Endothelial cell of umbilical vein (primary cell): ENCODE measurements at regions of chrX and their contacts with region 1.

Region 1: DNA sequence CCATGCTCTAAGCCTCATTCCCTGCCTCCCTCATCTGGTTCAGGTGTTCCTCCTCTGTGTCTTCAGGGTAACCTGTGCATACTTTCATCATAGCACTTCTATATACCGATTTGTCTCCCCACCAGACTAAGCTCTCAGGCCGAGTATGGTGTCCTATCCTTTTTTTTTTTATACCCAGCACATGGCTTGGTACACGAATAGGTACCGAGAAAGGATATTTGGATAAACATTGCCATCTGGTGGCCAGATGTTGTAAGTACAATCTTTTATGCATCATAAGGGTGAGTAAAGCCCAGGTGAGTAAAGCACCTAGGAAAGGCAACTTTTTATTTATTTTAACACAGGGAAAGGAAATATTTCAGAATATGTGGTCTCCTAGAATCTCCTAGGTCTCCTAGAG is 68.4 kb downstream of the MID2 start:
- DNase-seq: peak; percentile 47
- H3K4me3 ChIP-seq: no peak overlapping the region
- H3K27ac ChIP-seq: no peak overlapping the region
- H3K4me1 ChIP-seq: no peaks in the 10 kb centered on the region
- H3K27me3 ChIP-seq: no peaks in the 10 kb centered on the region
- CTCF ChIP-seq: peak in 1 of 2 donors; percentile 15
- POLR2A ChIP-seq: no peak

Region 2: DNA sequence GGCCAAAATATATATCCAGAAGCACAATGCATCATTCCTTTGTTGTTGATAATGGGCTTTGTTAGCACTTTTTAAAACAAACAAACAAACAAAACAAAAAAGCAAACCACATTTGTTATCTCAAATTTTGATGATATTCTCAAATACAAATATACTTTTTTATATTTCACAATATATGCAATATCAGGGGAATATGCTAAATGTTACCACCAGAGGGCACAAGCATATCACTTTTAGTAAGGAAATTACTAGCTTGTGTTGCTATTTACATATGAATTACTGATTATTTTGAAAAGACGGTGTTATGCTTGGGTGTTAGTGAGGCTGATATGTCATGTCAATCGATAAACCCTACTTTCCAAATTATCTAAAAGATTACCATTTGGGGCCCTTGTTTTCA is 1020.0 kb before region 1 on chrX:
- CTCF ChIA-PET with region 1: no interaction called
- POLR2A ChIA-PET with region 1: no interaction called
- dilution Hi-C with region 1: no loop called
- intact Hi-C with region 1: loop called (anchors 10 kb)
- DNase-seq: peak; percentile 35
- H3K4me3 ChIP-seq: no peak overlapping the region
- H3K27ac ChIP-seq: no peak overlapping the region
- H3K4me1 ChIP-seq: no peaks in the 10 kb centered on the region
- H3K27me3 ChIP-seq: no peaks in the 10 kb centered on the region
- CTCF ChIP-seq: peak in 1 of 2 donors; percentile 8
- POLR2A ChIP-seq: no peak

Region 3: DNA sequence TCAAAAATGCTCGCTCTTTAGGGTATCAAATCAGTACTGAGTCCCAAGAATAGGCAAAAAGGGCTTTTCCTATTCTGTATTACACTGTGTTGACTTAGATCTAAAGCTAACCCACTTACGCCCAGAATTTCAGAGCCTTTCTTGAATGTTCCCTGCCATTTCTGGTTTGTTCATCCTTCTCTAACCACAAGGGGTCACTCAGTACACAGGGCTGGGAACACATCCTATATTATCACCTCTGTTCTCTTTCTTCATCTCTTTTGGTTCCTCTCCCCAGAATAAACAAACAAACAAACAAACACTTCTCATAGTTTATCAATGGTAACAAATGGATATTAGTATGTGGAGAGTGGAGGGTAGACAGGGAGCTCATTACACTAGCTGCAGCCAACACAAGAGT is 868.5 kb before region 1 on chrX:
- CTCF ChIA-PET with region 1: no interaction called
- POLR2A ChIA-PET with region 1: no interaction called
- dilution Hi-C with region 1: no loop called
- intact Hi-C with region 1: loop called (anchors 1 kb)
- DNase-seq: peak; percentile 29
- H3K4me3 ChIP-seq: no peak overlapping the region
- H3K27ac ChIP-seq: no peak overlapping the region
- H3K4me1 ChIP-seq: no peaks in the 10 kb centered on the region
- H3K27me3 ChIP-seq: no peaks in the 10 kb centered on the region
- CTCF ChIP-seq: peak; percentile 24 to 39
- POLR2A ChIP-seq: no peak

Region 4: GRCh38 chrX:107537815-107538214 is 356.2 kb before region 1 on chrX:
- CTCF ChIA-PET with region 1: no interaction called
- POLR2A ChIA-PET with region 1: no interaction called
- dilution Hi-C with region 1: no loop called
- intact Hi-C with region 1: loop called (anchors 2 kb)
- DNase-seq: peak; percentile 29
- H3K4me3 ChIP-seq: no peak overlapping the region
- H3K27ac ChIP-seq: no peak overlapping the region
- H3K4me1 ChIP-seq: no peaks in the 10 kb centered on the region
- H3K27me3 ChIP-seq: no peaks in the 10 kb centered on the region
- CTCF ChIP-seq: peak; percentile 22 to 42
- POLR2A ChIP-seq: no peak

Region 5: DNA sequence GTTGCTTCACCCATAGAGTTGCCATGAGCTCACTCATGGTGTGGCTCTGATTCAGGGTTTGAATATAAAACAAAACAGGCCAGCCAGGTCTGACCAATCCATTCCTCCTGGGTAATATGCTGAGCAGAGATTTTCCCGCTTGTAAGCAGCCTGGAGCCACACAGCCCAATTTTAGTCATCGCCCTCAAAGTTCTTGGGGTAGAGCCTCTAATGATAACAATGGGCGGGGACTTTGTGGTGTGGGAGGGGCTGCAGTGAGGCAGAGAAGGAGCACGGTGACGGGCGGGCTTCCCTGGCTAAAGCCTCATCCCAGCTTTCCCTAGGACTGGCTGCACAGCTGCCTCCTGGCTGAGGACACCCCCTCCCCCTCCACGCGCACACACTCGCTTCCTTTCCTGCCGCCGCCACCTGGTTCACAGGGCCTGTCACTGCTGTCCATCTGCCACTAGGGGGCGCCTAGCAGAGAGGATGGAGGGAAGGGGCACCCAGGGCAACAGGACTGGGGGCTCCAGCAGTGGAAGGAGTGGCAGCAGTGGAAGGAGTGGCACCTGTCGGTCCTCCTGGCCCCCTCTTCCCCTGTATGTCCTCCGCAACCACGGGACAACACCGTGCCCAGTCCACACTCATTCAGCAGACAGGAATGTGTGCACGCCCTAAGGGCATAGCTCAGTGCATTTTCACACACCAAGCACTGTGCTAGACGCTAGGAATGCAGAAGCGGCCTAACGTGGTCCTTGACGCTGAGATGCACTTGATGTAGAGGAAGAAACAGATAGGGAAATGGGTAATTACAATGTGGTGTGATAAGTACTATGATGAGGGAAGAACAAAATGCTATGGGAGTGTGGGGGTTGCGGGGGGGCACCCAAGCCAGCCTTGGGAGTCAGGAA is 238.9 kb before region 1 on chrX:
- CTCF ChIA-PET with region 1: interaction called, 13 read pairs
- POLR2A ChIA-PET with region 1: no interaction called
- dilution Hi-C with region 1: no loop called
- intact Hi-C with region 1: loop called (anchors 1 kb)
- DNase-seq: peak; percentile 49
- H3K4me3 ChIP-seq: no peak overlapping the region
- H3K27ac ChIP-seq: peak overlapping the region; percentile 45
- H3K4me1 ChIP-seq: peaks cover 6% of the 10 kb centered on the region
- H3K27me3 ChIP-seq: no peaks in the 10 kb centered on the region
- CTCF ChIP-seq: peak; percentile 65 to 74
- POLR2A ChIP-seq: no peak

Region 6: DNA sequence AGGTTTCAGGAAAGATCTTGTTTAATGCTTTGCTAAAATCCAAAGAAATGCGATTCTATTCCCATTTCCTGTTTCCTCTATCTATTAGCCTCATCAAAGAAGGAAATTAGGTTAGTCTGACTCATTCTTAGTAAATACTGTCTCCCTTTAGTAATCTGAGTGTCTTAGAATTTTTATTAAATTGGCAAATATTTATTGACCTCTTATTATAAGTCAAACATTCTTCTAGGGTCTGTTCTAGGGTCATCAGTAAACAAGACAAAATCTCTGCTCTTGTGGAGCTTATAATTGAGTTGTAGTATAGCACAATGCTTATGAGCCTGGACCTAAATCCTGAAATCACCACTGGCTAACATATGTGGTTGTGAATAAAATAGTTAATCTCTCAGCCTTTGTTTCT is 79.3 kb before region 1 on chrX:
- CTCF ChIA-PET with region 1: no interaction called
- POLR2A ChIA-PET with region 1: no interaction called
- dilution Hi-C with region 1: no loop called
- intact Hi-C with region 1: no loop called
- DNase-seq: no peak
- H3K4me3 ChIP-seq: no peak overlapping the region
- H3K27ac ChIP-seq: no peak overlapping the region
- H3K4me1 ChIP-seq: no peaks in the 10 kb centered on the region
- H3K27me3 ChIP-seq: no peaks in the 10 kb centered on the region
- CTCF ChIP-seq: no peak
- POLR2A ChIP-seq: no peak

Region 7: GRCh38 chrX:107826238-107827029 is 67.6 kb before region 1 on chrX:
- CTCF ChIA-PET with region 1: interaction called, 5 read pairs
- POLR2A ChIA-PET with region 1: no interaction called
- dilution Hi-C with region 1: no loop called
- intact Hi-C with region 1: loop called (anchors 5 kb)
- DNase-seq: peak; percentile 36
- H3K4me3 ChIP-seq: peak overlapping the region; percentile 50 to 76 (median 54)
- H3K27ac ChIP-seq: peak overlapping the region; percentile 76
- H3K4me1 ChIP-seq: peaks cover 14% of the 10 kb centered on the region
- H3K27me3 ChIP-seq: no peaks in the 10 kb centered on the region
- CTCF ChIP-seq: no peak
- POLR2A ChIP-seq: peak; percentile 2